Breast epithelium (tissue), 4 donors: ENCODE measurements at regions of chr11 and their contacts with region 1.

Region 1: GRCh38 chr11:117559698-117560097 is 232.0 kb downstream of the CEP164 start:
- DNase-seq: no peak
- H3K4me3 ChIP-seq: no peak overlapping the region
- H3K27ac ChIP-seq: no peak overlapping the region
- H3K4me1 ChIP-seq: no peaks in the 10 kb centered on the region
- H3K27me3 ChIP-seq: no peaks in the 10 kb centered on the region
- CTCF ChIP-seq: no peak
- POLR2A ChIP-seq: no peak

Region 2: DNA sequence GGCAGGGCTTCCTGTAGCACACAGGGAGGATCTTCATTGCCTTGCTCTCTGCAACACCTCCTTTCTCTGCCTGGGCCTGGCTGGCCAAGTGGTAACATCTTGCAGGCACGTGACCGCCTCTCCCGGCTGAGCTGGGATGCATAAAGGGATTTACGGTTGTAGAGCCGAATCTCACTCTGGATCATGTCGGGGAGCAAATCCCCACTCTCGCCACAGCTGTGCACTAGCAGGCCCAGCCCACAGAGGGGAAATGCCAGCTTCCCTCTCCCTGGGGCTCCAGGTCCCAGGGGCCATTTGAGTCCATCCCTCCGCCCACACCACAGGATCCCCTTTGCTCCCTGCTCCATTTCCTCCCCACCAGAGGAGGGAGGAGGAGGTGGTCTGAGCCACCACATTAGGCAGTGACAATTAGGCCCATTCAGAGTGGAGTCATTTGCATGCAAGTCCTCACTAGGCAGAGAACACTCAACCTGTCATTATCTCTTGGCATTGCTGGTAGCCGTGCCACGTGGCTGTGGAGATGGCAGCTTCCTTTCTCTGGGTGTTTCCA is 40.6 kb after region 1 on chr11:
- intact Hi-C with region 1: loop called (anchors 2 kb)
- DNase-seq: no peak
- H3K4me3 ChIP-seq: no peak overlapping the region
- H3K27ac ChIP-seq: no peak overlapping the region
- H3K4me1 ChIP-seq: no peaks in the 10 kb centered on the region
- H3K27me3 ChIP-seq: peaks cover 0 to 3% of the 10 kb centered on the region in 2 donors
- CTCF ChIP-seq: no peak
- POLR2A ChIP-seq: no peak